ENCODE measurements at regions of chr2 and their contacts with region 1.

Region 1: GRCh38 chr2:53767405-53768241 is at the start of gene CHAC2:
- DNase-seq: peak; percentile 81 to 91
- ATAC-seq: peak; percentile 91 to 94 (median 93)
- H3K4me3 ChIP-seq: peak within 1 kb of the TSS; percentile 87
- H3K4me3 Mint-ChIP-seq: peak within 1 kb of the TSS; percentile 93
- H3K27ac ChIP-seq: peak within 1 kb of the TSS; percentile 82
- H3K27ac Mint-ChIP-seq: peak within 1 kb of the TSS; percentile 90 to 93
- H3K4me1 ChIP-seq: peaks cover 4% of the 10 kb centered on the region
- H3K4me1 Mint-ChIP-seq: peaks cover 17 to 21% of the 10 kb centered on the region in 2 donors
- H3K27me3 ChIP-seq: no peaks in the 10 kb centered on the region
- H3K27me3 Mint-ChIP-seq: no peaks in the 10 kb centered on the region
- CTCF ChIP-seq: peak; percentile 22
- total RNA-seq, gene CHAC2: 0.83 to 1.5 (median 1.4) TPM

Region 2: GRCh38 chr2:53632714-53633113 is 134.9 kb before region 1 on chr2:
- intact Hi-C with region 1: no loop called
- DNase-seq: no peak
- ATAC-seq: no peak
- H3K4me3 ChIP-seq: no peak overlapping the region
- H3K4me3 Mint-ChIP-seq: no peak overlapping the region
- H3K27ac ChIP-seq: no peak overlapping the region
- H3K27ac Mint-ChIP-seq: no peak overlapping the region
- H3K4me1 ChIP-seq: no peaks in the 10 kb centered on the region
- H3K4me1 Mint-ChIP-seq: no peaks in the 10 kb centered on the region
- H3K27me3 ChIP-seq: no peaks in the 10 kb centered on the region
- H3K27me3 Mint-ChIP-seq: peaks cover 0 to 2% of the 10 kb centered on the region in 2 donors
- CTCF ChIP-seq: no peak

Region 3: DNA sequence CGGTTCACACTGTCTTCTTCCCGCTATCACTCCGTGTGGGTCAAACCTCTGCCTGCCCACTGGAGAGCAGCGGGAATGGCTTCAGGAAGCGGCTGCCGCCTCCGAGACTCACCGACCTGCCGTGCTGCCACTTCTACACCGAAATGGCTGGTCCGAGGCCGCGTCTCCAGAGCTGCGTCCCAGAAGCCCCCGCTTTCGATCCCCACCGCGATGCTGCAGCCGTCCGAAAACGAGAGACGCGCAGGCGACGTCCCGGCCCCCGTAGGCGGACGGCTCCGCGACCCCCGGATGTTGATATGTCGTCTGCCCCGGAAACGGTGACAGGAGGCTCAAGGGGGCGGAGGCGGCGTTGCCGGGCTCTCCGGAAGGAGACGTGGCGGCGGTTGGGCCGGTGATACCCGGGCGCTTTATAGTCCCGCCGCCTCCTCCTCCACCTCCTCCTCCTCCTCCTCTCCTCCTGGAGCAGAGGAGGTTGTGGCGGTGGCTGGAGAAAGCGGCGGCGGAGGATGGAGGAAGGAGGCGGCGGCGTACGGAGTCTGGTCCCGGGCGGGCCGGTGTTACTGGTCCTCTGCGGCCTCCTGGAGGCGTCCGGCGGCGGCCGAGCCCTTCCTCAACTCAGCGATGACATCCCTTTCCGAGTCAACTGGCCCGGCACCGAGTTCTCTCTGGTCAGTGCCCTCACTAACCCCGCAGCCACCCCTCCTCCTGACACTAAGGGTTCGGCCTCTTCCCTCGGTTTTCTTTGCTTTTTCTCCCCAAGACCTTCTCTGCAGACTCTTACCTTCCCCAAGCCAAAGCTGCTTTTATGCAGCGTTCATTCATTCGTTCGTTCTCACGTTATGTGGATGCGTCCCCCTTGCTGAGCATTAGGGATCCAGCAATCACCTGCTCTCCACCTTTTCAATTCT is 19.3 kb after region 1 on chr2 and contains the starts of genes ASB3 and ERLEC1:
- intact Hi-C with region 1: loop called (anchors 1 kb)
- DNase-seq: peak; percentile 86 to 93
- ATAC-seq: peak; percentile 88 to 96 (median 94)
- H3K4me3 ChIP-seq: peak within 1 kb of the TSS; percentile 85
- H3K4me3 Mint-ChIP-seq: peak within 1 kb of the TSS; percentile 95
- H3K27ac ChIP-seq: peak within 1 kb of the TSS; percentile 82
- H3K27ac Mint-ChIP-seq: peak within 1 kb of the TSS; percentile 94 to 96
- H3K4me1 ChIP-seq: peaks cover 12% of the 10 kb centered on the region
- H3K4me1 Mint-ChIP-seq: peaks cover 42 to 45% of the 10 kb centered on the region in 2 donors
- H3K27me3 ChIP-seq: no peaks in the 10 kb centered on the region
- H3K27me3 Mint-ChIP-seq: no peaks in the 10 kb centered on the region
- CTCF ChIP-seq: no peak
- total RNA-seq, gene ASB3: 27.9 to 37.0 (median 29.6) TPM
- total RNA-seq, gene ERLEC1: 19.7 to 27.1 (median 21.7) TPM

Measured in natural killer cell (primary cell).